ENCODE measurements at regions of chr16 and their contacts with region 1.

Region 1: GRCh38 chr16:1054660-1055556 is 17.6 kb upstream of the SSTR5 start:
- DNase-seq: no peak
- H3K4me3 ChIP-seq: no peak overlapping the region
- H3K27ac ChIP-seq: no peak overlapping the region
- H3K4me1 ChIP-seq: peaks cover 0 to 8% of the 10 kb centered on the region in 2 donors
- H3K27me3 ChIP-seq: no peaks in the 10 kb centered on the region
- CTCF ChIP-seq: peak; percentile 71 to 90 (median 85)

Region 2: DNA sequence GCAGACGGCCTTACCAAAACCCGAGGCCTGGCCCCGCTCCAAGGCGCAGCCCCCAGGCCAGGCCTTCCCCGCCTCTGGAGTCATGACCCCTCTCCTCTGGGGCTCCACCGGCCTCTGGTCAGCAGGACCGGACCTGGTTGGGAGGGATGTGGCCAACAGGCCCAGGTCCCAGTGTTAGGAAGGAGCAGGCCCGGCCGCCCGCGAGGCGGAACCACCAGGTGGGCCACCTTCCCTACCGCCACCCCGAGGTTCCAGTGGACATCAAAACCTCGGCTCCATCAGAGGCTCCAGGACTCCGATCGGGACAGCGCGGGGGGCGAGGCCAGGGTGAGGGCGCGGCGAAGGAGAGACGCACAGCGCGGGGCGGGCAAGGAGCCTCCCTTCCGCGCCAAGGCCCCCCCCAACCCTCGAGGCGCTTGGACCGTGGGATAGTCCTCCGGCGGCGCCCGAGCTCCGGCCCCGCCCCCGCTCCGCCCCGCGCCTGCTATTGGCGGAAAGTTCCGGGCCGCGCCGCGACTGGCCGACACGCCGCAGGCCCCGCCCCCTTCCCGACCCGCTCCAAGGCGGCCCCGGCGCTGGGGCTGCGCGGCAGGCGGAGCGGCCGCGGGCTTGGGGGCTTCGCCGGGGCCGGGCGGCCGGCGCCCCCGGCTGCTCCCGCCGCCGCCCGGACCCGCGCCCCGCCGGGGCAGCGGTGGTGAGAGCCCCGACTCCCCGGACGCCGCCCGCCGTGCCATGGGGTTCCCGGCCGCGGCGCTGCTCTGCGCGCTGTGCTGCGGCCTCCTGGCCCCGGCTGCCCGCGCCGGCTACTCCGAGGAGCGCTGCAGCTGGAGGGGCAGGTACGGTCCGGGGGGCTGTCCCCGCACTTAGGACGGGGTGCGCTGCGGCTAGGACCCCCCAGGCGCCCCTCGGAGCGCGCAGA is 340.1 kb before region 1 on chr16 and contains the start of gene METRN:
- intact Hi-C with region 1: loop called (anchors 2 kb)
- DNase-seq: peak; percentile 39 to 95
- H3K4me3 ChIP-seq: peak within 1 kb of the TSS; percentile 76 to 93
- H3K27ac ChIP-seq: no peak within 1 kb of the TSS
- H3K4me1 ChIP-seq: peaks cover 11 to 20% of the 10 kb centered on the region in 2 donors
- H3K27me3 ChIP-seq: peaks cover 6% of the 10 kb centered on the region
- CTCF ChIP-seq: no peak
- total RNA-seq, gene METRN: 118 TPM

Region 3: DNA sequence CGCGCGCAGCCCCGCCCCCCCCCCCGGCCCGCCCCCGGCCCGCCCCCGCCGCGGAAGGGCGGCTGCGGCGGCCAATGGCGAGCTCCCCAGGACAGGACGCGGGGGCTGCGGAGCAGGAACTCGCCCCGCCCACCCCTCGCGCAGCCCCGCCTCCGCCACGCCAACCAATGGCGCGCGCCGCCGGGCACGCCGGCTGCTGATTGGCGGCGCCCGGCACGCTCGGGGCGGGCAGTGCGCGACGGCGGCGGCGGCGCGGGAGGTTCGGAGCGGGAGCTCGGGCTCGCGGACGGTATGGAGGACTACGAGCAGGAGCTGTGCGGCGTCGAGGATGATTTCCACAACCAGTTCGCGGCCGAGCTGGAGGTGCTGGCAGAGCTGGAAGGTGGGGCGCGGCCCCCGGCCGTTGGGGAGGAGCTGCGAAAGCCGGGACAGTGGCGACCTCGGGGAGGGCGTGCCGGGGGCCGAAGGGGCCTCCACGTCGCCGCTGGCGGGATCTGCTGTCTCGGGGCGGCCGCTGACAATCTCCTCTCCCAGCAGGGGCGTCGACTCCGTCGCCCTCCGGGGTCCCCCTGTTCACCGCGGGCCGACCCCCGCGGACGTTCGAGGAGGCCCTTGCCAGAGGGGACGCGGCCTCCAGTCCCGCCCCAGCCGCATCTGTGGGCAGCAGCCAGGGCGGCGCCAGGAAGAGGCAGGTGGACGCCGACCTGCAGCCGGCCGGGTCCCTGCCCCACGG is 266.3 kb before region 1 on chr16 and contains the start of gene CHTF18:
- intact Hi-C with region 1: loop called (anchors 10 kb)
- DNase-seq: peak; percentile 63 to 95
- H3K4me3 ChIP-seq: peak within 1 kb of the TSS; percentile 92 to 99
- H3K27ac ChIP-seq: peak within 1 kb of the TSS; percentile 21 to 49
- H3K4me1 ChIP-seq: peaks cover 7 to 17% of the 10 kb centered on the region in 2 donors
- H3K27me3 ChIP-seq: no peaks in the 10 kb centered on the region
- CTCF ChIP-seq: no peak
- total RNA-seq, gene CHTF18: 19.9 TPM

Region 4: DNA sequence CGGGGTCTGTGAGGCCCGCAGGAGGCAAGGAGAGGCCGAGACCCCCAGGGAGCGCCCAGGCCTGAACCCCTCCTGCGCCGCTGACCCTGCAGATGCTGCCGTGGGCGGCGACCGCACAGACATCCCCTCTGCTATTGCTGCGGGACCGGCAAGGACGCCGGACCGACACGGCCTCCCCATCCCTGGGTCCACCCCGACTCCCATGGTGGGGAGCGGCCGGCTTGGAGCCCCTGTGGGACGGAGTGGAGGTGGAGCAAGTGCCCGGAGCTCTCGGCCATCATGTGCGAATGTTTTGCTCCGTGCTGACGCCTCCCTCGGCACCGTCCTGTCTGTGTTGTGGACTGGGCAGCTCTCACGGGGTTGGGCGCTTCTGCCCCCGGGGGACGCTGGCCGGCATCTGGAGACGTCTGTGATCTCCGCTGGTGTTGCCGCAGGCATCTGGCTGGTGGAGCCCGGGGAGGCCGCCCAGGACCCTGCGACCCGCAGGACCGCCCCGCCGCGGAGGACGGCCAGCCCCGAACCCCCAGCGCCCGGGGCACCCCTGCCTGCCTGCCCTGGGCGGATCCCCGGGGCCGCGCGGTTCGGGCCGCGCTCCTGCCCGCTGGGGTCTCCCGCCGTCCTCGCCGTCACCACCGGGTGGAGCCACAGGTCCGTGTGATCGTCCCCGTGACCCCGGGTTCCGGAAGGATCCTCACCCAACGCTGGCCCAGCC is 241.5 kb before region 1 on chr16:
- intact Hi-C with region 1: loop called (anchors 5 kb)
- DNase-seq: no peak
- H3K4me3 ChIP-seq: peak overlapping the region in 1 of 2 donors; percentile 26
- H3K27ac ChIP-seq: no peak overlapping the region
- H3K4me1 ChIP-seq: peaks cover 1 to 3% of the 10 kb centered on the region in 2 donors
- H3K27me3 ChIP-seq: peaks cover 6% of the 10 kb centered on the region
- CTCF ChIP-seq: peak in 2 of 3 experiments; percentile 38 to 47

Region 5: DNA sequence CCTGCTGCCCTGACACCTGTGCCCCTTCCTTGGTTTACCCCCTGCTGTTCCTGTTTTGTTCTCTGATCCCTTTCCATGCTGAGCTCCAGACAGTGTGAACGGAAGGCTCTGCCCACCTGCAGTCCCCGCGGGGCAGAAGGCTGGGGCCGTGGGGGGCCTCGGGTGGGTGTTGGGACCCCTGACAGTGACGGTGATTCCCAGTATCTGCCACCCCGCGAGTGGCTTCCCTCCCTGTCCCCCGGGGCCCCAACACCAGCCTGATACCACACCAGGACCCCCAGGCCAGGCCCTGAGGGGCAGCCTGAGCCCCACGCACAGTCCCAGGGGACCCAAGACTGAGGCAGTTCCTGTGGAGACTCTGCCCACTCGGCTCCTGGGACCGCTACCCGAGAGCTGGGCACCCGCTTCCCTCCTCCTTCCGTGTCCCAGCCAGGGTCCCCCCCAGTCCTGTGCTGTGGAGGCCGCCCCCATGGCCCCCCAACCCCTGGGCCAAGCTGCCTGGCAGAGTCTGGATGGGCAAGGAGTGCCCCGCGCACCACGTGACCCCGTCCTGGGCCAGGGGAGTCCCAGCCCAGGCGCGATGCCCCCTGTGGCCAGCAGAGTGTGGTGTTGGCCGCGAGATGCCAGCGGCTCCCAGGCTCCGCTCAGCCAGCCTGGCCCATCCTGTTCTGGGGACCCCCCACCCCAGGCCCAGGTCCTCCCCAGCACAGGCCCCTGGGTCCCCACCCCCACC is 51.1 kb after region 1 on chr16:
- intact Hi-C with region 1: loop called (anchors 1 kb)
- DNase-seq: peak in 1 of 2 donors; percentile 78
- H3K4me3 ChIP-seq: no peak overlapping the region
- H3K27ac ChIP-seq: no peak overlapping the region
- H3K4me1 ChIP-seq: peaks cover 0 to 7% of the 10 kb centered on the region in 2 donors
- H3K27me3 ChIP-seq: peaks cover 14% of the 10 kb centered on the region
- CTCF ChIP-seq: peak; percentile 87 to 93 (median 90)

Region 6: DNA sequence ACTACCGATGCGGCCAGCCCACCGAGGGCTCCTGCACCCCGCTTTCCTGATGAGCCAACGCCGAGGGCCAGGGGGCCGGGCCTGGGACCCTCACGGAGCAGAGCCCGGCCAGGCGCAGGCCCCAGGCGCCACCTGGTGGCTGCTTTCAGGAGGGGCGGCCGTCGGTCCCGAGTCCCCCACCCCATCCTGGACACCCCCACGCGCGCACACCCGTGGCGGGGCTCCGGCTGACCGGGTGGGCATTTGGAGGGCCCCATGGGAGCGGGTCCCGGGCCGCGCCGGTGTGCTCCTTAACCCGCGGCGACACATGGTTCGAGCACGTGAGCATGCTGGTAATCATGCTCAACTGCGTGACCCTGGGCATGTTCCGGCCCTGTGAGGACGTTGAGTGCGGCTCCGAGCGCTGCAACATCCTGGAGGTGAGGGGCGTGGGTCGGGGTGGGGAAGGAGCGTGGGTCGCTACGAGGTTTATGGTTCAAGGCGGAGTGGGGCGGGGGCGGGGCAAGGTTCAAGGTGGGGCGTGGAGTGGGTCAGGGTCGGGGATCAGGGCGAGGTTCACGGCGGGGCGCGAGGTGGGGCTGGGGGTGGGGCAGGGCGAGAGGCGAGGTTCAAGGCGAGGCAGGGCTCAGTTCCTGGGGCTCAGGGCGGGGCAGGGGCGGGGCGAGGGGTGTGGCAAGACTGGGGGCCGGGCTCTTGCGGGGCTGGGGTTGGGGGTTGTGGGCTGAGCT is 139.9 kb after region 1 on chr16:
- intact Hi-C with region 1: loop called (anchors 2 kb)
- DNase-seq: no peak
- H3K4me3 ChIP-seq: no peak overlapping the region
- H3K27ac ChIP-seq: no peak overlapping the region
- H3K4me1 ChIP-seq: no peaks in the 10 kb centered on the region
- H3K27me3 ChIP-seq: no peaks in the 10 kb centered on the region
- CTCF ChIP-seq: peak; percentile 91 to 97 (median 93)

Region 7: GRCh38 chr16:1278477-1278876 is 223.6 kb after region 1 on chr16:
- intact Hi-C with region 1: no loop called
- DNase-seq: no peak
- H3K4me3 ChIP-seq: no peak overlapping the region
- H3K27ac ChIP-seq: no peak overlapping the region
- H3K4me1 ChIP-seq: no peaks in the 10 kb centered on the region
- H3K27me3 ChIP-seq: no peaks in the 10 kb centered on the region
- CTCF ChIP-seq: no peak